T-cell (primary cell): ENCODE measurements at regions of chr19 and their contacts with region 1.

Region 1: GRCh38 chr19:58440556-58440955 is 603 bp upstream of the ZNF132 start:
- DNase-seq: peak in 1 of 35 experiments; percentile 1
- ATAC-seq: peak in 1 of 4 experiments; percentile 0
- H3K4me3 ChIP-seq: peak overlapping the region; percentile 71 to 84
- H3K4me3 Mint-ChIP-seq: peak overlapping the region; percentile 85 to 98 (median 93)
- H3K27ac ChIP-seq: peak overlapping the region; percentile 82
- H3K27ac Mint-ChIP-seq: peak overlapping the region; percentile 93 to 96
- H3K4me1 ChIP-seq: peaks cover 6 to 25% of the 10 kb centered on the region in 2 experiments
- H3K4me1 Mint-ChIP-seq: peaks cover 15 to 36% (median 34%) of the 10 kb centered on the region in 3 donors
- H3K27me3 ChIP-seq: peaks cover 0 to 4% of the 10 kb centered on the region in 2 experiments
- H3K27me3 Mint-ChIP-seq: no peaks in the 10 kb centered on the region

Region 2: DNA sequence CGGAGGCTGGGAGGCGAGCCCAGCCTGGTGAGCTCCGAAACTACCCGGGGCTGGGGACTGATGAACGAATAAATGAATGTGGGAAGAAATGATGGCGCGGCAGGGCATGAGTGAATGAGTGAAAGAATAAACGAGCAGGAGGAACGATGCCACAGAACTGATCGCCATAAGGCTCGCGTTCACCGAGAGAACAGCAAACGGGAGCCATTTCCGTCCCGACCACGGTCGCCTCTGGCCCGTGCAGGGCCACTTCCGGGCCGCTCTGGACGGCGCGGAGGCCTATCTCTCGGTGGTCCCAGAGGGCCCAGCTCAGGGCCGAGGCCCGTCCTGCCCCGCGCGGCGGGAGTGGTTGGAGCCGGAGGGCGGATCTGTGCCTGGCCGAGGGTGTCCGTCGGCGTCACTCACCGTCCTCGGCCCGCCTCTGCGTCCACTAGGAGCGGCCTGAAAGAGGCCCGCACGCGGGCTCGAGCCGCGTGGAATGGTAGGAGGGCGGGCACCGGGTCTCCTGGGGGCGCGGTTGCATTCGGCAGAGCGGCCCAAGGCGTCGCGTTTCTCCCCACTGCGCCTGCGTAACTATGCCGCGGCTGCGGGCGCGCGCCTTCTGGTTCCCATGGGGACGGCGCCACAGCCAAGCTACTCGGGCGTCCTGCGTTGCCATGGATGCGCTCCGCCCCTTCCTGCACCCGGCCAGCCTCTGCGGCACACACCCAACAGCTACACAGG is 78.1 kb before region 1 on chr19 and contains the start of gene ZNF497:
- CTCF ChIA-PET with region 1: no interaction called
- POLR2A ChIA-PET with region 1: no interaction called
- DNase-seq: peak; percentile 90 to 99 (median 95)
- ATAC-seq: peak; percentile 87 to 96 (median 92)
- H3K4me3 ChIP-seq: peak within 1 kb of the TSS; percentile 83 to 86
- H3K4me3 Mint-ChIP-seq: peak within 1 kb of the TSS; percentile 83 to 92 (median 89)
- H3K27ac ChIP-seq: peak within 1 kb of the TSS; percentile 67
- H3K27ac Mint-ChIP-seq: peak within 1 kb of the TSS; percentile 80 to 90
- H3K4me1 ChIP-seq: peaks cover 0 to 31% of the 10 kb centered on the region in 2 experiments
- H3K4me1 Mint-ChIP-seq: peaks cover 11 to 17% (median 11%) of the 10 kb centered on the region in 3 donors
- H3K27me3 ChIP-seq: peaks cover 0 to 22% of the 10 kb centered on the region in 2 experiments
- H3K27me3 Mint-ChIP-seq: no peaks in the 10 kb centered on the region
- total RNA-seq, gene ZNF497: 0.98 to 3.4 (median 2.2) TPM

Region 3: GRCh38 chr19:58386576-58387337 is 53.8 kb before region 1 on chr19 and contains the start of gene RPS5:
- CTCF ChIA-PET with region 1: no interaction called
- POLR2A ChIA-PET with region 1: interaction called in 1 of 2 experiments, 11 read pairs
- DNase-seq: peak; percentile 85 to 99 (median 96)
- ATAC-seq: peak; percentile 90 to 93 (median 92)
- H3K4me3 ChIP-seq: peak within 1 kb of the TSS; percentile 66 to 80
- H3K4me3 Mint-ChIP-seq: peak within 1 kb of the TSS; percentile 92 to 93 (median 93)
- H3K27ac ChIP-seq: peak within 1 kb of the TSS; percentile 96
- H3K27ac Mint-ChIP-seq: peak within 1 kb of the TSS; percentile 96 to 97
- H3K4me1 ChIP-seq: peaks cover 14 to 43% of the 10 kb centered on the region in 2 experiments
- H3K4me1 Mint-ChIP-seq: peaks cover 51% of the 10 kb centered on the region in 3 donors
- H3K27me3 ChIP-seq: no peaks in the 10 kb centered on the region
- H3K27me3 Mint-ChIP-seq: no peaks in the 10 kb centered on the region
- total RNA-seq, gene RPS5: 1,332 to 1,813 (median 1,414) TPM